ENCODE measurements at regions of chr12 and their contacts with region 1.

Region 1: DNA sequence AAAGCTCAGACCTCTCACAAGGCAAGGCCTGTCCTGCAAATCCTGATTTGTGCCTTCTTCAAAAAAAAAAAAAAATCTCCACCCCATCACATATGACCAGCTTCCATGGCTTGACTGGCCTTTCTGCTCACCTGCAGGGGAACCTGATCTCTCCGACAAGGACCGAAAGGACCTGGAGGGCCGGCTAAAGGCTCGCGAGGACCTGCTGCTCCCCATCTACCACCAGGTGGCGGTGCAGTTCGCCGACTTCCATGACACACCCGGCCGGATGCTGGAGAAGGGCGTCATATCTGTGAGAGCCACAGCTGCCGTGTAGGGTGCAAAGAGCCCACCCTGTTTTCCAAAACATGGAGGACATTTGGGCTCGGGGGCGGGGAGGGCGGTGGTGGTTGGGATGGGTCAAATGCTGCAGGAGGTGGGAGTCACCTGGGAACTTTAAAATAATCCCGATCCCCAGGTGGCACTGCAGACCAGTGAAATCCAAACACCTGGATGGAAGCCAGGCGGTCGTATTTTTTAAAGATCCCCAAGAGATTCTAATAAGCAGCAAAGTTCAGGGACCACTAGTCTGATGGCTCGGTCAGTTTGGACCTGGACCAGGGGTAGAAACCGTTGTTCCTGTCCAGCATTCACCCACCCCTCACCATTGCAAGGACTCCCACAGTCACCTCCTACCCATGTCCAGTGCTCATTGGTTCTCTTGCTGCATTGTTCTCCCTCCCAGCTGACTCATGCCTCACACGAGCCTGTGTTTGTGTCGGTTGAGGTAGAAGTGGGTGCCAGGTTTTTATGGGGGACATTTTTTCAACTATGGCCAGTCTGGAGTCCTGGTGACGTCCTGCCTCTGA is 44.8 kb downstream of the FOXN4 start:
- DNase-seq: peak; percentile 63
- H3K4me3 Mint-ChIP-seq: no peak overlapping the region
- H3K27ac Mint-ChIP-seq: no peak overlapping the region
- H3K4me1 Mint-ChIP-seq: no peaks in the 10 kb centered on the region
- H3K27me3 Mint-ChIP-seq: no peaks in the 10 kb centered on the region

Region 2: GRCh38 chr12:109239179-109239578 is 25.1 kb before region 1 on chr12:
- CTCF ChIA-PET with region 1: no interaction called
- POLR2A ChIA-PET with region 1: no interaction called
- DNase-seq: no peak
- H3K4me3 Mint-ChIP-seq: no peak overlapping the region
- H3K27ac Mint-ChIP-seq: no peak overlapping the region
- H3K4me1 Mint-ChIP-seq: no peaks in the 10 kb centered on the region
- H3K27me3 Mint-ChIP-seq: no peaks in the 10 kb centered on the region

Region 3: DNA sequence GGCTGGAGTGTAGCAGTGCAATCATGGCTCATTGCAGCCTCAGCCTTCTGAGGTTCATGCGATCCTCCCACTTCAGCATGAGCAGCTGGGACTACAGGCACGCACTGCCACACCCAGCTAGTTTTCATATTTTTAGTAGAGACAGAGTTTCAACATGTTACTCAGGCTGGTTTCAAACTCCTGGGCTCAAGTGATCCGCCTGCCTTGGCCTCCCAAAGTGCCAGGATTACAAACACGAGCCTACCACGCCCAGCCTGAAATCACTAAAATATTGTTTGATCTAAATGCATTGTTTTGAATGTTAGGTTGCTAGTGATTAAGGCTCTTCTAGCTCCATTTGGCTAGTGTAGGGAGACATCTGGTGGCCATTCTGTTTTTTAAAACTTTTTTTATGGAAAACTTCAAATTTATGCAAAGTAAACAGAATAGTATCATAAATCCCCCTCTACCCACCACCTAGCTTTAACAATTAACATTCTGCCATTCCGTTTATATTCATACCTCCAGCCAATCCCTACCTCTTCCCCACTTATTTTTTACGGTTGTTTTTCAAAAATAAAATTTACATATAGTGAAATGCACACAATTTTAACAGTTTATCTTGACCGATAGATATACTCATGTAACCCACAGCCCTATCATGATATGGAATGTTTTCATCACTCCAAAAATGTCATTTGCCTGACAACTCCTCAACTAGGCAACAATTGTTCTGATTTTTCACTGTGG is 121.2 kb after region 1 on chr12:
- CTCF ChIA-PET with region 1: interaction called, 11 read pairs
- POLR2A ChIA-PET with region 1: no interaction called
- DNase-seq: no peak
- H3K4me3 Mint-ChIP-seq: no peak overlapping the region
- H3K27ac Mint-ChIP-seq: no peak overlapping the region
- H3K4me1 Mint-ChIP-seq: no peaks in the 10 kb centered on the region
- H3K27me3 Mint-ChIP-seq: peaks cover 45% of the 10 kb centered on the region

Region 4: DNA sequence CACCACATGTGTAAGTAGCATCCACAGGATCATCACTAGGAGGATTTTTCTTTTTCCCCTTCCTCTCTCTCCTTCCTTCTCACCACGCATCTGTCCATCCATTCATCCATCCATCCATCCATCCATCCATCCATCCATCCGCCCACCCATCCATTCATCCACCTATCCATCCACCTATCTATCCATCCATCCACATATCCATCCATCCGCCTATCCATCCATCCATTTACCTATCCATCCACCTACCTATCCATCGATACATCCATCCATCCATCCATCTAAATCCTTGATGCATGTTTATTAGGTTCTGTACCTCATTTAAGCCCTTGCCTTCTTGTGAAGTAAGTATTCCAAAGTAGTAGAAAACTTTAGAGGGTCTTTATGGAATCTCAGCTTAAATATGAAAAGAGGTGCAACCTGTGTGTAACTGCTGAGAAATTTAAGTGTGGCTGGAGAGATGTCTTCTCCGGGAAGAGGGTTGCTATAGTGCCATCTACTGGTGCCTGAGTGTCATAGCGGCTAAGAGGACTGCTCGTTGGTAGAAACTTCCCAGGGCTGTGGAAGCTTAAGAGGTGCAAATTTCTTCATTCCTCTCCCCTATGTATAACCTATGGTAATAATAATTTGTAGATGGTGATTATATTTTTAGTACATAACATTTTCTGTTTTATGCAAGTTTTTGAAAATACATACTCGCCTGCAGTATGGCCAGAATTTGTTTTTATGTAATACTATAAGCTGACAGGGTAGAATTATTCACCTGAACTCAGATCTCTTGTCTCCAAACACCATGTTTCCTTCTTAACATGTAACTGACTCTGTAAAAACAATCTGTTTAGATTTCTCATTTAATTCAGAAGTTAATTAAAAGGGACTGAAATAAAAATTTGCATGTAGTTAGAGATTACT is 129.4 kb after region 1 on chr12:
- CTCF ChIA-PET with region 1: interaction called, 12 read pairs
- POLR2A ChIA-PET with region 1: no interaction called
- DNase-seq: peak; percentile 37
- H3K4me3 Mint-ChIP-seq: no peak overlapping the region
- H3K27ac Mint-ChIP-seq: no peak overlapping the region
- H3K4me1 Mint-ChIP-seq: no peaks in the 10 kb centered on the region
- H3K27me3 Mint-ChIP-seq: peaks cover 21% of the 10 kb centered on the region

Measured in activated CD4-positive, alpha-beta memory T cell treated with anti-CD3 and anti-CD28 coated beads, Interleukin-2, amount 10 ng/mL, durations not matched to agents 7 days and 5 days (primary cell).